Tibial artery (tissue), 4 donors: ENCODE measurements at regions of chr17 and their contacts with region 1.

Region 1: GRCh38 chr17:20226814-20227482 is 217.8 kb downstream of the SPECC1 start:
- DNase-seq: peak; percentile 81 to 91
- H3K4me3 ChIP-seq: no peak overlapping the region
- H3K27ac ChIP-seq: peak overlapping the region; percentile 13 to 50
- H3K4me1 ChIP-seq: peaks cover 0 to 57% (median 14%) of the 10 kb centered on the region in 4 donors
- H3K27me3 ChIP-seq: no peaks in the 10 kb centered on the region
- CTCF ChIP-seq: peak; percentile 78 to 98

Region 2: GRCh38 chr17:19992803-19993713 is 233.9 kb before region 1 on chr17:
- intact Hi-C with region 1: loop called (anchors 5 kb)
- DNase-seq: peak; percentile 91 to 94
- H3K4me3 ChIP-seq: no peak overlapping the region
- H3K27ac ChIP-seq: no peak overlapping the region
- H3K4me1 ChIP-seq: peaks cover 0 to 4% (median 2%) of the 10 kb centered on the region in 4 donors
- H3K27me3 ChIP-seq: no peaks in the 10 kb centered on the region
- CTCF ChIP-seq: peak; percentile 66 to 89

Region 3: DNA sequence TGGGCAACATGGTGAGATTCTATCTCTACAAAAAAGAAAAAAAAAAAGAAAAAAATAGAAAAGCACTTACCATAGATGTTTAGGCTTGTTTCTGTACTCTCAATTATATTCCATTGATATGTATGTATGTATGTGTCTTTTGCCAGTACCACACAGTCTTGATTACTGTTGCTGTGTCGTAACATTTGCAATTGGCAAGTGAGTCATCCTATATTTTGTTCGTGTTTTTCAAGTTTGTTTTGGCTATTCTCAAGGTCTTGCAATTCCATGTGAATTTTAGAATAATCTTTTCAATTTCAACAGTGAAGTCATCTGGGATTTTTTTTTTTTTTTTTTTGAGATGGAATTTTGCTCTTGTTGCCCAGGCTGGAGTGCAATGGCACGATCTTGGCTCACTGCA is 198.5 kb before region 1 on chr17:
- intact Hi-C with region 1: no loop called
- DNase-seq: no peak
- H3K4me3 ChIP-seq: no peak overlapping the region
- H3K27ac ChIP-seq: peak overlapping the region in 1 of 2 donors; percentile 23
- H3K4me1 ChIP-seq: peaks cover 0 to 11% (median 0%) of the 10 kb centered on the region in 4 donors
- H3K27me3 ChIP-seq: no peaks in the 10 kb centered on the region
- CTCF ChIP-seq: no peak

Region 4: DNA sequence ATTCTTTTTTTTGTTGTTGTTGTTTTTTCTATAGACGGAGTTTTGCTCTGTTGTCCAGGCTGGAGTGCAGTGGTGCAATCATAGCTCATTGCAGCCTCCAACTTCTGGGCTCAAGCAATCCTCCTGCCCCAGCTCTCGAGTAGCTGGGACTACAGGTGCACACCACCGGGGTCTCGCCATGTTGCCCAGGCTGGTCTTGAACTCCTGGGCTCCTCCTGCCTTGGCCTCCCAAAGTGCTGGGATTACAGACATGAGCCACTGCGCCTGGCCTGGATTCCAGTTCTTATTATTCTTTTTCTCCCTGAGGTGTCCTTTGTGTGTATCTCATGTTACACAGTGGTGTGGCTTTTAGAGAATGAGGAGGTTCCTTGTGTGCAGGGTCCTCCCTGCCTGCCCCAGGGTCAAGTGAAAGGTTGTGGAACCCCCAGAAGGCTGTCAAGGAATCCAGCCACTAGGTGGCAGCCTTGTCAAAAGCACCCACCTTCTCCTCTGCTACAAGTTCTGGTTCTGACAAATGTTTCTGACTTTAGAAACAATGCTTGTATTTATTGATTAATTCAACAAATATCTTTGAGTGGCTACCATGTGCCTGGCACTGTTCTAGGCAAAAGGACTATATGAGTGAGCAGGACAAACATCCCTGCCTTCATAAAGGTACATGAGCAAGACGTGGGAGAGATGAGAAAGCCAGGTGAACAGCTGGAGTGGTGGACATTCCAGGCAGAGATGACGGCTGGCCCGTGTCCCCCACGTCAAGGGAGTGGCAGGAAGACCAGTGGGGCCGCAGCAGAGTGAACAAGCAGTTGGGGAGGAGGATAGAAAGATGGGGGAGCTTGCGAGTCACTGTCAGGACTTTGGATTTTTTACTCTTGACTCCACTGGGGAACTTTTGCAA is 105.3 kb before region 1 on chr17:
- intact Hi-C with region 1: loop called (anchors 5 kb)
- DNase-seq: peak; percentile 58 to 72
- H3K4me3 ChIP-seq: peak overlapping the region in 1 of 2 donors; percentile 12
- H3K27ac ChIP-seq: peak overlapping the region; percentile 20 to 31
- H3K4me1 ChIP-seq: peaks cover 0 to 27% (median 11%) of the 10 kb centered on the region in 4 donors
- H3K27me3 ChIP-seq: no peaks in the 10 kb centered on the region
- CTCF ChIP-seq: peak; percentile 82 to 85

Region 5: DNA sequence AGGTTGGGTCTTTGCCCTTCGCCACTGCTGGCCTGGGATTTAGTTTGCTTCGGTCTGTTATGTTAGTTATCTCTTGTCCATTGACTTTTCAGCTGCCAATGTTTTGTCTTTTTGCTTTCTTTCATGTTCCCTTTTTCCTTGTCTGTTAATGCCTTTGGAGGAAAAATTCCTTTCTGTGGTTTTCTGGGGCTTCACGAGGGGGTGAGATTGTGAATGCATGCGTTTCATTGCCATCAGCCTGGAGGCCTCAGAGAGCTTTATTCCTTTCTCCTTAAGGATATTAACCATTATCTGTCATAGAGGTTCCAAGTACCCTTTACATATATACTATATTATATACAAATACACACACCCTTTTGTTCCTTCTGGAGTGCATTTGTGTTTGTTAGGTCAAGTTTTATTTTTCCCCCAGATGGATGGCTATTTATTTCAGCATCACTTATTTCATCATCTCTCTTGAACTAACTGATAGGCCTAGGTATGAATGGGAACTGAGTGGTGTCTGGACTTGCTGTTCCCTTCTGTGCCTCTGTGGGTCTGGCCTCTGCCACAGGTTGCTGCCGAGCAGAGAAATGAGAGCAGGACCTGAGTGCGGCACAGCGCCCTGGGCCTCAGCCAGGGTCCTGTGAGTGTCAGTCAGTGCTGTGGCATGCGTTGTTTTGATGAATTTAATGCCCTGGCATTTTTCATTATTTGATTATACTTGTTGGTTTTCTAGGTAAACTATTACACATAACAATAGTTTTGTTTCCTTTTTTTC is 47.0 kb after region 1 on chr17:
- intact Hi-C with region 1: loop called (anchors 5 kb)
- DNase-seq: no peak
- H3K4me3 ChIP-seq: no peak overlapping the region
- H3K27ac ChIP-seq: no peak overlapping the region
- H3K4me1 ChIP-seq: peaks cover 0 to 48% (median 26%) of the 10 kb centered on the region in 4 donors
- H3K27me3 ChIP-seq: no peaks in the 10 kb centered on the region
- CTCF ChIP-seq: no peak

Region 6: GRCh38 chr17:20284570-20285295 is 57.8 kb after region 1 on chr17:
- intact Hi-C with region 1: no loop called
- DNase-seq: no peak
- H3K4me3 ChIP-seq: no peak overlapping the region
- H3K27ac ChIP-seq: no peak overlapping the region
- H3K4me1 ChIP-seq: peaks cover 0 to 15% (median 8%) of the 10 kb centered on the region in 4 donors
- H3K27me3 ChIP-seq: no peaks in the 10 kb centered on the region
- CTCF ChIP-seq: no peak

Region 7: GRCh38 chr17:20315821-20316220 is 88.9 kb after region 1 on chr17:
- intact Hi-C with region 1: loop called (anchors 2 kb)
- DNase-seq: no peak
- H3K4me3 ChIP-seq: no peak overlapping the region
- H3K27ac ChIP-seq: no peak overlapping the region
- H3K4me1 ChIP-seq: peaks cover 0 to 8% (median 3%) of the 10 kb centered on the region in 4 donors
- H3K27me3 ChIP-seq: no peaks in the 10 kb centered on the region
- CTCF ChIP-seq: no peak